Heart left ventricle (tissue), 16 donors: ENCODE measurements at regions of chr6 and their contacts with region 1.

Region 1: GRCh38 chr6:31952140-31952805 is 6.4 kb downstream of the CFB start:
- DNase-seq: peak in 4 of 5 donors; percentile 49 to 73 (median 61)
- ATAC-seq: peak in 3 of 4 donors; percentile 40 to 68 (median 66)
- H3K4me3 ChIP-seq: no peak overlapping the region
- H3K27ac ChIP-seq: peak overlapping the region in 2 of 12 donors; percentile 19 to 21
- H3K4me1 ChIP-seq: peaks cover 0 to 3% (median 0%) of the 10 kb centered on the region in 12 donors
- H3K27me3 ChIP-seq: no peaks in the 10 kb centered on the region
- CTCF ChIP-seq: peak; percentile 55 to 79 (median 70)
- POLR2A ChIP-seq: no peak

Region 2: DNA sequence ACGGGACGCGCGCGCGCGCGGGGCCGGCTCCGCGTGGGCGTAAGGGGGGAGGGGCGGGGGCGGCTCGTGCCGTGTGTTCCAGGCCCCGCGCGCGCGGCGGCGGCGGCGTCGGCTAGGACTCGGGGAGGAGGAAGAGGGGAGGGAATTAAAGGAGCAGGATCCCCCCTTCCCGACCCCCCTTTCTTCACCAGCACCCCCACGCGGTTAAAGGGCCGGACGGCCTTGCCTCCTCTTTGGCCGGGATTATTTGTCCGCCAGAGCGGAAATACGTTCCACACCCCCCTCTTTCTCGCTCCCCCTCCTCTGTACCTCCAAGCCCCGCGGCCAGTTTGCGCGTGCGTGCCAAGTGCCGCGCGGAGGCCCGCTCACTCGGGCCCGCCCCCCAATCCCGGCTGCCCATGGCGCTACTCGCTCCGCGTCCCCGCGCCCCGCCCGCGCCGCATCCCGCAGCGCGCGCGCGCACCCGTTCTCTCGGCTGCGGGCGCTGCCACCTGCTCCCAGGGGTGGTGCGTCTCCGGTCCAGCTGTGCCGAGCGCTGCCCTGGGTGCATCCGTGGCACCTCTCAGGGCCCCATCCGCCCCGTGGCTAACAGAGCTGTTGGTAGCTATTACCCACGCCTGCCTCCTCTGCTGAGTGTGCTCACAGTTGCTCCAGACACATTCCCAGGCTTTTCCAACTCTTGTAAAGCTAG is 50.2 kb before region 1 on chr6 and contains the start of gene ZBTB12:
- intact Hi-C with region 1: loop called in 9 of 10 experiments (anchors 5 to 10 kb)
- DNase-seq: peak; percentile 93 to 94 (median 93)
- ATAC-seq: peak; percentile 60 to 85 (median 82)
- H3K4me3 ChIP-seq: peak within 1 kb of the TSS; percentile 49 to 95 (median 66)
- H3K27ac ChIP-seq: peak within 1 kb of the TSS; percentile 61 to 91 (median 84)
- H3K4me1 ChIP-seq: peaks cover 0 to 41% (median 20%) of the 10 kb centered on the region in 12 donors
- H3K27me3 ChIP-seq: no peaks in the 10 kb centered on the region
- CTCF ChIP-seq: peak in 3 of 12 donors; percentile 9 to 19 (median 15)
- POLR2A ChIP-seq: peak in 1 of 2 donors; percentile 55
- total RNA-seq, gene ZBTB12: 0.99 to 4.3 (median 2.3) TPM

Region 3: DNA sequence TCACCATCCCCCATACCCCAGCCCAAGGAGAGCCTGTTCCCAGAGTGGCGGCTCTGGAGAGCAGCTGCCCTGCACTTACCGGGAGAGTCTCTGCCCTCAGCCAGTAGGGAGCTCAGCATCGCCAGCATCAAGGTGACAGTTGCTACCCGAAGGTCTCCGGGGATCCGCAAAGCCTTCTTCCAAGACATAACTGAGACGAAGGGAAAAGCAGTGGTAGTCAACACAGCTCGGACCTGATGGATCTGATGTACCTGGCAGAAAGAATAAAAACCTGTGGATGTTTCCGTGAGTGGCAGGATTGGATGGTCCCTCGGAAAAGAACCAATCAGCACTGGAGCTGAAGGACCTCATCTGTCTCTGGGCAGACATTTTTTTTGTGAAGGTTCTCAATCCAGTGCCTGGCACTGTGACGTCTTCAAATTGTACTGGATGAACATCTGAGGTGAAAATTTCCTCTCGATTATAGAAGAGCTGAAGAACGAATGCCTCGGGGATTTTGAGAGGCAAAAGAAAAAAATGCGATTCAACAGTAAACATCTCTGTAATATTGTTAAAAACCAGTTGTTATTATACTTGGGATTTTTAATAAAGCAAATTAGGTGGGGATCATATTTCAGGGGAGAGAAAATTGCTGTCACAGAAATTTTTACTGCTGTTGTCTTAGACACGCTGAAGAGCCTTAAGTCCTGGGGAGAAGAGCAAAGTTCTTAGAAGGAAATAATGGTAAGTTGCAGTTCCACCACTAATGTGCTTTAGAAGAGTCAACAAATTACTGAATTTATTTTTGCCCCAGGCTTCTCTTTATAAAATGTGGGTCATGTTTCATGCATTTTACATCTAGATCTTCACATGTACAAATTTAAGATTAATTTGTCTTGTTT is 714.4 kb after region 1 on chr6 and contains the start of gene HLA-DQB1:
- intact Hi-C with region 1: no loop called
- DNase-seq: peak in 2 of 5 donors; percentile 41 to 57
- ATAC-seq: peak; percentile 70 to 92 (median 88)
- H3K4me3 ChIP-seq: peak within 1 kb of the TSS in 9 of 12 donors; percentile 20 to 62 (median 37)
- H3K27ac ChIP-seq: peak within 1 kb of the TSS in 8 of 12 donors; percentile 59 to 81 (median 72)
- H3K4me1 ChIP-seq: peaks cover 0 to 10% (median 0%) of the 10 kb centered on the region in 12 donors
- H3K27me3 ChIP-seq: peaks cover 0 to 12% (median 0%) of the 10 kb centered on the region in 9 donors
- CTCF ChIP-seq: no peak
- POLR2A ChIP-seq: no peak
- total RNA-seq, gene HLA-DQB1: 0.38 to 86.5 (median 14.9) TPM